Right ventricle myocardium inferior (tissue), 1 donor: ENCODE measurements at regions of chr7 and their contacts with region 1.

Region 1: DNA sequence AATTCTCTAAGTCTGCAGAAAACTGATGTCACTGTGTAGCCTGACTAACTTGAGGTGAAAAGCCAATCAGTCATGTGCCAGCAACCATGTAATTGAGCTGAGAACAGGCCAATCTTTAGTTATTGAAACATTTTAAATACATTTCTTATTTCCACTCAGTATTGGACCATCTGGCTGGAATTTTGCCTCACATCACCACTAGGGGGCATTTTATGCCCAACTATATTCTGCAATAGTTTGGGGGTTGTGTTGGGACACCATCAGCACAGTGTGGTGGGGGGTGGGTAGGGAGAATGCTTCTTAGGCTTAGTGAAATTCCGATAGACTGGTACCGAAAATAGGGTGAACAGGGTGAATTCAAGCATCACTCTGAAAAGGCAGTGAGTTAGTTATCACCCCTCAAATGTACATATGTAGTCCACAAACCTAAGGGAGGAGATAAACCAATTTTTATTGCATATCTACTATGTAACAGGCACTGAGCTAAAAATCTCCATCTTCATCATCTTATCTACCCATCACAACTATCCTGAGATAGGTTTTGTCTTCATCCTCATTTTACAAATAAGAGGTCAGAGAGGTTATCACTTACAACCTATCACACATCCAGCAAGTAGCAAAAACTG is 17.8 kb downstream of the NPSR1 start:
- DNase-seq: no peak
- ATAC-seq: no peak

Region 2: GRCh38 chr7:34133983-34134782 is 541.7 kb before region 1 on chr7:
- intact Hi-C with region 1: loop called (anchors 5 kb)
- DNase-seq: peak; percentile 72
- ATAC-seq: peak; percentile 62

Region 3: GRCh38 chr7:34823640-34824258 is 147.9 kb after region 1 on chr7:
- intact Hi-C with region 1: loop called (anchors 5 kb)
- DNase-seq: no peak
- ATAC-seq: no peak